Activated CD8-positive, alpha-beta T cell treated with anti-CD3 and anti-CD28 coated beads, Interleukin-2, amount 10 ng/mL, durations not matched to agents 7 days and 5 days (primary cell): ENCODE measurements at regions of chr7 and their contacts with region 1.

Region 1: GRCh38 chr7:89622838-89623672 is 531.2 kb upstream of the STEAP1 start:
- DNase-seq: peak; percentile 58
- ATAC-seq: peak; percentile 84
- H3K4me3 Mint-ChIP-seq: no peak overlapping the region
- H3K27ac Mint-ChIP-seq: peak overlapping the region; percentile 27
- H3K4me1 Mint-ChIP-seq: peaks cover 24% of the 10 kb centered on the region
- H3K27me3 Mint-ChIP-seq: peaks cover 2% of the 10 kb centered on the region

Region 2: GRCh38 chr7:89607792-89608191 is 15.3 kb before region 1 on chr7:
- CTCF ChIA-PET with region 1: interaction called, 13 read pairs
- POLR2A ChIA-PET with region 1: no interaction called
- DNase-seq: peak; percentile 69
- ATAC-seq: peak; percentile 83
- H3K4me3 Mint-ChIP-seq: peak overlapping the region; percentile 29
- H3K27ac Mint-ChIP-seq: peak overlapping the region; percentile 54
- H3K4me1 Mint-ChIP-seq: peaks cover 53% of the 10 kb centered on the region
- H3K27me3 Mint-ChIP-seq: no peaks in the 10 kb centered on the region

Region 3: GRCh38 chr7:89687211-89687610 is 64.2 kb after region 1 on chr7:
- CTCF ChIA-PET with region 1: no interaction called
- POLR2A ChIA-PET with region 1: no interaction called
- DNase-seq: no peak
- ATAC-seq: no peak
- H3K4me3 Mint-ChIP-seq: no peak overlapping the region
- H3K27ac Mint-ChIP-seq: no peak overlapping the region
- H3K4me1 Mint-ChIP-seq: no peaks in the 10 kb centered on the region
- H3K27me3 Mint-ChIP-seq: no peaks in the 10 kb centered on the region